ENCODE measurements at regions of chr11 and their contacts with region 1.

Region 1: GRCh38 chr11:119934866-119935265 is 203.0 kb downstream of the TRIM29 start:
- DNase-seq: no peak
- ATAC-seq: no peak
- H3K4me3 ChIP-seq: no peak overlapping the region
- H3K27ac ChIP-seq: no peak overlapping the region
- H3K4me1 ChIP-seq: no peaks in the 10 kb centered on the region
- H3K27me3 ChIP-seq: peaks cover 2 to 36% (median 7%) of the 10 kb centered on the region in 3 donors
- CTCF ChIP-seq: no peak

Region 2: GRCh38 chr11:119673759-119674336 is 261.0 kb before region 1 on chr11:
- intact Hi-C with region 1: loop called in 1 of 2 experiments (anchors 1 kb)
- DNase-seq: no peak
- ATAC-seq: peak in 2 of 4 donors; percentile 28 to 30
- H3K4me3 ChIP-seq: no peak overlapping the region
- H3K27ac ChIP-seq: no peak overlapping the region
- H3K4me1 ChIP-seq: peaks cover 5% of the 10 kb centered on the region
- H3K27me3 ChIP-seq: peaks cover 0 to 5% (median 0%) of the 10 kb centered on the region in 3 donors
- CTCF ChIP-seq: no peak

Region 3: DNA sequence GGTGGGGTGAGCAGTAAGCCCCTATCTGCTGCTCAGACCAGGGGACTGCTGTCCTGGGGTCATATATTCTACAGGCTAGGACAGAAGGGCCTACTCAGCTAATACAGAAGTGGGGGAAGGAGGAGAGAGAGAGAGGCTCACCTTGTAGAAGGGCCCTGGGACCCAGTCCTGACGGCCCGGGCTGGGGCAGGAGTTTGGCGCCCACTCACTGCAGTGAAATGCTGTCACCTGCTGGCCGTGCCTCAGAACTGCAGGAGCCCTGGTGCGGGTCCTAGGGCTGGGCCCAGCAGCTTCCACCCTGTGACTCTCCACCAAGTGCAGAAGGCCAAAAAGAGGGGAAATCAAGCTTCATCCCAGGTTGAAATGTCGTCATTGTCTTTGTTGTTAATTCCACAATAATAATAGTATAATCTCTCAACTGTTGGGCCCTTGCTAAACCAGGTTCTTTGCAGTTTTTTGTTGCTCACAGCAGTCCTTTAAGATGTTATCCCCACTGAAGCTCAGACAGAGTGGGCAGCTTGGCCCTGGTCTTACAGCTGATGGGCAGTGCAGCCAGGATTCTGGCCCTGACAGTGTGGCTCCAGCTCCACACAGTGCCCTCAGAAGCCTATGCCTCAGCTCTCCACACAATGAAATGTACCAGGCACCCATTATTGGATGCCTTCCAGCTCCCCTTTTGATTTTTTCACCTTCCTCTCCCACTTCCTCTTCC is 173.4 kb after region 1 on chr11:
- intact Hi-C with region 1: no loop called
- DNase-seq: peak; percentile 65 to 80
- ATAC-seq: peak; percentile 86 to 92 (median 88)
- H3K4me3 ChIP-seq: no peak overlapping the region
- H3K27ac ChIP-seq: no peak overlapping the region
- H3K4me1 ChIP-seq: no peaks in the 10 kb centered on the region
- H3K27me3 ChIP-seq: peaks cover 0 to 5% (median 2%) of the 10 kb centered on the region in 3 donors
- CTCF ChIP-seq: peak; percentile 99

Measured in psoas muscle (tissue), 8 donors.